ENCODE measurements at regions of chr20 and their contacts with region 1.

Region 1: DNA sequence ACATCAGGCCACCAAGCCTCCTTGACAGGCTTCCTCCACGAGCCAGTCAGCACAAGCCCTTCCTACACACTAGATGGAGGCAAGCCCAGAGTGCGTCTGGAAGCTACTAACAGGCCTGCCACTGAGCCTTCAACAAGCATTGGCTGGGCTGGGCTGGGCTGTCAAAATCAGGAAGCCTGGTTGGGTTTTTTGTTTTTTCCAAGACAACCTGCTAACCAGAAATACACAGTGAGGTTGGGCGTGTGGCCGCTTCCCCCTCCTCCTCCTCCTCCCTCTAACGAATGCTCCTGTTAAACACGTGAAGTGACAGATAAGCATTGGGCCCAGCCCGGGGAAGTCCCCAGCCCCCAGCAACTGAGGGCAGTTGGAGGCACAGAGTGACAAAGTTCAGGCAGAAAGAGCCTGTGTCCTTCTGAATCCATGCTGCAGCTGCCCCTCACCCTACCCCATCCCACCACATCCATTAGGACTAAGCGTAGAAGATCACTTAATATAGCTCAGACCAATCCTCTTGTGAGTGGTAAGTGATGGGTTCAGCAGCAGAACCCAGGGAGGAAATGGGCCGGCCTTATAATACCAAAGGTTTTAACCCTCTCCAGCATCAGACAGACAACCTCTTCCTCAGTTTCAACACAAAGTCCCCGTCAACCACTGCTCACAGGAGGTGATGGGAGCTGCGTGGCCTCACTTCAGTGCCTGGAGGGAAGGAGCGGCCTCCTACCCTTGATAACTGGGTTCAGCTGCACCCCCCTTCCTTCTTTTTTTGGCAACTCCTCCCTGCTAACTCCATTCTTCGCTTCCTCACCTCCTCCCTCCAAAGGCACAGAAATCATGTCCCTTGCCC is 1.1 kb downstream of the NFATC2 start:
- DNase-seq: peak; percentile 93
- ATAC-seq: peak; percentile 86
- H3K4me3 Mint-ChIP-seq: peak overlapping the region; percentile 93
- H3K27ac Mint-ChIP-seq: peak overlapping the region; percentile 98
- H3K4me1 Mint-ChIP-seq: peaks cover 55% of the 10 kb centered on the region
- H3K27me3 Mint-ChIP-seq: peaks cover 11% of the 10 kb centered on the region

Region 2: DNA sequence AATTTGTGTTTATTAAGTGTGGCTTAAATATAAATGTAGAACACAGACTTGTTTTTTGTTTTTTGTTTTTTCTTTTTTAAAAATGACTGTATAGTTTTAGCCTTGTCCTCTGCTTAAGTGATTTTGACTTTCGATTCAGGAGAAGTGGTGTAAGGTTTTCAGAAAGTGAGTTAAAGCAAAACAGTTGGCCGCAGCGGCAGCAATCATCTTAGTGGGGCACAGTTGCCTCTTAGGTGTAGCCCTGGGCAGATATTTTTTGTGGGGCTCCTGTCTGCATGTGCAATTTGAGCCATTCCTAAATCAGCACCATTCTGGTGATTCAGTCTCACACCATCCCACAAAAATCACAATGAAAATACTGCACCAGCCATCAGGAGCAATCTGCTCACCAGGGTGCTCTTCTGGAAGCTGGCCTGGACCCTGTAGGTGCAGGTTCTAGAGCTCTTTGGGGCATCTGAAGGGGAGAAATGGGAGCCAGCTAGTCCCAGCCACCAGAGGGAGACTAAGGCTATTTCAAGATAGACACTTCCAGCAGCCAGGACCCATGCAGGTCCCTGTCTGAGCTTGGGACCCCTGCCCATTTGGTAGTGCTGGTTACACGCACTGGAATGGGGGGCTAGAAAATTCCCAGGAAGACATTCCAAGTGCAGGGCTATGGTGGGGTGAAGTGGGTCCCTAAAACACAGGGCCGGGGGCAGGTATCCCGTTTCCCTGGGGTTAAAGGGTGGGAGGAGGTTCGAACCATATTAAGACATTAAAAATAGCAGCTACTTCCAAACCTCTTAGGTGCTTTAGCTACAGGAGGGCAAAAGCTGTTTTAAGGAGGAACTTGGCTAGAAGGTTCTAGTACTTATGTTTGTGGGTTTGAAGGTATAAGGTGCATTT is 155.5 kb before region 1 on chr20:
- CTCF ChIA-PET with region 1: interaction called, 34 read pairs
- POLR2A ChIA-PET with region 1: interaction called, 6 read pairs
- DNase-seq: peak; percentile 54
- ATAC-seq: peak; percentile 54
- H3K4me3 Mint-ChIP-seq: no peak overlapping the region
- H3K27ac Mint-ChIP-seq: peak overlapping the region; percentile 58
- H3K4me1 Mint-ChIP-seq: peaks cover 69% of the 10 kb centered on the region
- H3K27me3 Mint-ChIP-seq: no peaks in the 10 kb centered on the region

Region 3: GRCh38 chr20:51469578-51470498 is 71.6 kb before region 1 on chr20:
- CTCF ChIA-PET with region 1: interaction called, 11 read pairs
- POLR2A ChIA-PET with region 1: no interaction called
- DNase-seq: no peak
- ATAC-seq: no peak
- H3K4me3 Mint-ChIP-seq: peak overlapping the region; percentile 17
- H3K27ac Mint-ChIP-seq: peak overlapping the region; percentile 90
- H3K4me1 Mint-ChIP-seq: peaks cover 66% of the 10 kb centered on the region
- H3K27me3 Mint-ChIP-seq: no peaks in the 10 kb centered on the region

Region 4: GRCh38 chr20:51500311-51500710 is 41.1 kb before region 1 on chr20:
- CTCF ChIA-PET with region 1: interaction called, 16 read pairs
- POLR2A ChIA-PET with region 1: interaction called, 13 read pairs
- DNase-seq: peak; percentile 81
- ATAC-seq: peak; percentile 89
- H3K4me3 Mint-ChIP-seq: no peak overlapping the region
- H3K27ac Mint-ChIP-seq: peak overlapping the region; percentile 73
- H3K4me1 Mint-ChIP-seq: peaks cover 88% of the 10 kb centered on the region
- H3K27me3 Mint-ChIP-seq: no peaks in the 10 kb centered on the region

Region 5: GRCh38 chr20:51525241-51526129 is 15.9 kb before region 1 on chr20:
- CTCF ChIA-PET with region 1: interaction called, 16 read pairs
- POLR2A ChIA-PET with region 1: interaction called, 30 read pairs
- DNase-seq: peak; percentile 44
- ATAC-seq: peak; percentile 66
- H3K4me3 Mint-ChIP-seq: peak overlapping the region; percentile 67
- H3K27ac Mint-ChIP-seq: peak overlapping the region; percentile 90
- H3K4me1 Mint-ChIP-seq: peaks cover 75% of the 10 kb centered on the region
- H3K27me3 Mint-ChIP-seq: no peaks in the 10 kb centered on the region